CD4-positive, alpha-beta T cell (primary cell): ENCODE measurements at regions of chr7 and their contacts with region 1.

Region 1: GRCh38 chr7:100148559-100149350 is at the start of gene LAMTOR4:
- DNase-seq: peak; percentile 94 to 100 (median 97)
- ATAC-seq: peak; percentile 95
- H3K4me3 ChIP-seq: peak within 1 kb of the TSS; percentile 99
- H3K4me3 Mint-ChIP-seq: peak within 1 kb of the TSS; percentile 92
- H3K27ac ChIP-seq: peak within 1 kb of the TSS; percentile 93 to 94
- H3K27ac Mint-ChIP-seq: peak within 1 kb of the TSS; percentile 95
- H3K4me1 ChIP-seq: peaks cover 41% of the 10 kb centered on the region
- H3K4me1 Mint-ChIP-seq: peaks cover 38% of the 10 kb centered on the region
- H3K27me3 ChIP-seq: no peaks in the 10 kb centered on the region
- H3K27me3 Mint-ChIP-seq: no peaks in the 10 kb centered on the region
- CTCF ChIP-seq: peak; percentile 9
- total RNA-seq, gene LAMTOR4: 107 to 125 TPM

Region 2: DNA sequence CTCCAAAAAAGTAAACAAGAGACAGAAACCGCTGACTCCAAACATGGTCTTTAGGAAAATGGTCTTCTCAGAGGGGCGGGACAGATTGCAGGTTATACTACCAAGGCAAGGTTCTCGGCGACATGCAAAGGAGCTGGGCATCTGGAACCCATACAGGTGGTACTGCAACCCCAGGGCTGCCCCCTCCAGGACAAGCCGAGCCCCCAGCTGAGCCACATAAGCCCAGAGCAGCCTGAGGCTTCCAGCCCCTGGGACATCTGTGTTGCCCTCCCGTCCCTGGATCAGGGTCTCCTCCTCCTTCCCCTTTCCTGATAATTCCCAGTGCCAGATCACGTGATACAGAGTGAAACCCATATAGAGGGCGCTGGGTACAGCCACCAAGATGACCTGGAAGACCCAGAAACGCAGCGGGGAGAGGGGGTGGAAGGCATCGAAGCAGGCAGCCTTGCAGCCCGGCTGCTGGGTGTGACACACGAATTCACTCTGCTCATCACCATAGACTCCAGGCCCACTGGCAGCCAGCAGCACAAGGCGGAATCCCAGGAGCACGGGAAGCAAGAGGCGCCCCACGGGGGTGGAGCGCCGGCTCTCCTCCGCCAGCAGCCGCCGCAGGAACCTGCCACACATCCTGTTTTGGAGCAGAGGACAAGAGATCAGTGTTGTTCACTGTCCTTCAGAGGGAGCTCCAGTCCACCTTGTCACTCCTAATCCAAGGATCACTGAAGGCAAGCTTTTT is 219.6 kb before region 1 on chr7 and contains the start of gene GJC3:
- CTCF ChIA-PET with region 1: no interaction called
- POLR2A ChIA-PET with region 1: no interaction called
- intact Hi-C with region 1: no loop called
- DNase-seq: peak; percentile 15 to 68 (median 45)
- ATAC-seq: peak; percentile 94
- H3K4me3 ChIP-seq: peak within 1 kb of the TSS; percentile 43
- H3K4me3 Mint-ChIP-seq: peak within 1 kb of the TSS; percentile 79
- H3K27ac ChIP-seq: no peak within 1 kb of the TSS
- H3K27ac Mint-ChIP-seq: peak within 1 kb of the TSS; percentile 61
- H3K4me1 ChIP-seq: peaks cover 18% of the 10 kb centered on the region
- H3K4me1 Mint-ChIP-seq: peaks cover 31% of the 10 kb centered on the region
- H3K27me3 ChIP-seq: peaks cover 0 to 13% of the 10 kb centered on the region in 2 experiments
- H3K27me3 Mint-ChIP-seq: peaks cover 6% of the 10 kb centered on the region
- CTCF ChIP-seq: no peak
- total RNA-seq, gene GJC3: 0.25 to 0.36 TPM

Region 3: DNA sequence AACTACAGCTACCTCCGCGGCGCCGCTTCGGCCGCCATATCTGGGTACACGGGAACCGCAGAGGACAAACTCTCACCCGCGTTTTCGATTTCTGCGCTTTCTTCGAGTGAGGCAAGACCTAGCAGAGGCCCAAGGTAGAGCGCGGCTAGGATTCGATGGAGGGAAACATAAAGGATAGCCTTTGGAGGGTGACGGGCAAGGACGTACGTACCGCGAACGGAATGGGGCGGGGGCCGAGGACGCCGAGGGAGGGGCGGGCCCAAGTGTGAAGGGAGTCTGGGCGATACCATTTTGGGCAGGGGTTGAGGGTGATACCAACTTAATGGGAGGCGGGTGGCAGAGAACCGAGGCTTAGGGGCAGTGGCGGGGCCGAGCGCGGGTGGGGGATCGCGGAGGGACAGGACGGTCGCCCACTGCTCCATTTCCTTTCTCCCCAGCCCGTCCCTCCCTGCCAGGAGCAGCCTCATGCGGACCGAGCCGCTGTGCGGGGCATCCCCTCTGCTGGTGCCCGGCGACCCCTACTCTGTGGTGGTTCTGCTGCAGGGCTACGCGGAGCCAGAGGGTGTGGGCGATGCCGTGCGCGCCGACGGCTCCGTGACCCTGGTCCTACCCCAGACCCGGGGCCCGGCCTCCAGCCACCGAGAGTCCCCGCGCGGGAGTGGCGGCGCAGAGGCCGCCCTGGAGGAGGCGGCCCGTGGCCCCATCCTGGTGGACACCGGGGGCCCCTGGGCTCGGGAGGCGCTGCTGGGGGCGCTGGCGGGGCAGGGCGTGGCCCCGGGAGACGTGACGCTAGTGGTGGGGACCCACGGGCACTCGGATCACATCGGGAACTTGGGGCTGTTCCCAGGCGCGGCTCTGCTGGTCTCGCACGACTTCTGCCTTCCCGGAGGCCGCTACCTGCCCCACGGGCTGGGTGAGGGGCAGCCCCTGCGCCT is 21.6 kb before region 1 on chr7 and contains the start of gene MBLAC1:
- CTCF ChIA-PET with region 1: interaction called, 9 read pairs
- POLR2A ChIA-PET with region 1: interaction called, 13 read pairs
- intact Hi-C with region 1: loop called in 1 of 2 experiments (anchors 2 kb)
- DNase-seq: peak; percentile 87 to 97 (median 91)
- ATAC-seq: peak; percentile 80
- H3K4me3 ChIP-seq: peak within 1 kb of the TSS; percentile 96
- H3K4me3 Mint-ChIP-seq: peak within 1 kb of the TSS; percentile 100
- H3K27ac ChIP-seq: peak within 1 kb of the TSS; percentile 96 to 99
- H3K27ac Mint-ChIP-seq: peak within 1 kb of the TSS; percentile 100
- H3K4me1 ChIP-seq: peaks cover 39% of the 10 kb centered on the region
- H3K4me1 Mint-ChIP-seq: peaks cover 31% of the 10 kb centered on the region
- H3K27me3 ChIP-seq: no peaks in the 10 kb centered on the region
- H3K27me3 Mint-ChIP-seq: no peaks in the 10 kb centered on the region
- CTCF ChIP-seq: no peak
- total RNA-seq, gene MBLAC1: 3.7 to 4.4 TPM

Region 4: DNA sequence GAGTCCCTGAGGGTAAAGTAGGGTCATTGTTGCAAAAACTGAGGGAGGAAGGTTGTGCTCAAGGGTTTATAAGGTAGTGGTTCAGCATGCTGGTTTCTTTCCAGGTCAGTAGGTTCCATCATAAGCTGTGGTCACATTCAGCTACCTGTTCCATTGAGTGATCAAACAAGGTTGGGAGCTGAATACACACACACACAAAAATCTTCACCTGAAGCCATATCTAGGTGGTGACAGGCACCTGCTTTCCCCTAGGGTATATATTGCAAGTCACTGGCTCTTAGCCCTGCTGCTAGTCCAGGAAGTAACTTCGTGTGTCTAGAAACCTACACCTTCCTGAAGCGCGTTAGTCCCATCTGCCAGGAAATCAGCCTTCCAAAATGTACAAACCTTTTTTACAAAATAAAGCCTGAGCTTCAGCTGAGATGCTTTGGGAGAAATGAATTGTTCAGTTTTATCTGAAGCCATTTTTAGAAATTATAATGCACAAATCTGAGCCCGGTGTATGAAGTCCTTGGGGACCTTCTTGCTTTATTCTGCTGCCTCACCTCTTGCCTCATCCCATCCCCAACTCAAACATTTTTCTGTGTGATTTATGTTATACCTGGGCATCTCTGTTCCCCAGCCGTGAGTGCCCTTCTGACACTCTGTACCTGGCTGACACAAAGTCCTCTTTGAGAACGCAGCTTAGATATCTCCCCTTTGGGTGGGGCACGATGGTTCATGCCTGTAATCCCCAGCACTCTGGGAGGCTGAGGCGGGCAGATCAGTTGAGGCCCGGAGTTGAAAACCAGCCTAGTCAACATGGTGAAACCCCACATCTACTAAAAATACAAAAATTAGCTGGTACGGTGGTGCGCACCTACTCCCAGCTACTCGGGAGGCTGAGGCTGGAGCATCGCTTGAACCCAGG is 10.6 kb before region 1 on chr7:
- CTCF ChIA-PET with region 1: interaction called, 5 read pairs
- POLR2A ChIA-PET with region 1: interaction called, 12 read pairs
- intact Hi-C with region 1: loop called in 1 of 2 experiments (anchors 2 kb)
- DNase-seq: peak in 1 of 14 experiments; percentile 36
- ATAC-seq: peak; percentile 65
- H3K4me3 ChIP-seq: no peak overlapping the region
- H3K4me3 Mint-ChIP-seq: no peak overlapping the region
- H3K27ac ChIP-seq: no peak overlapping the region
- H3K27ac Mint-ChIP-seq: peak overlapping the region; percentile 26
- H3K4me1 ChIP-seq: peaks cover 8% of the 10 kb centered on the region
- H3K4me1 Mint-ChIP-seq: peaks cover 13% of the 10 kb centered on the region
- H3K27me3 ChIP-seq: no peaks in the 10 kb centered on the region
- H3K27me3 Mint-ChIP-seq: no peaks in the 10 kb centered on the region
- CTCF ChIP-seq: no peak

Region 5: GRCh38 chr7:100171087-100171681 is 22.4 kb after region 1 on chr7:
- CTCF ChIA-PET with region 1: no interaction called
- POLR2A ChIA-PET with region 1: interaction called, 53 read pairs
- intact Hi-C with region 1: loop called in 1 of 2 experiments (anchors 2 kb)
- DNase-seq: peak in 6 of 14 experiments; percentile 25 to 69 (median 56)
- ATAC-seq: peak; percentile 22
- H3K4me3 ChIP-seq: peak overlapping the region; percentile 52
- H3K4me3 Mint-ChIP-seq: peak overlapping the region; percentile 85
- H3K27ac ChIP-seq: peak overlapping the region in 1 of 2 donors; percentile 50
- H3K27ac Mint-ChIP-seq: peak overlapping the region; percentile 91
- H3K4me1 ChIP-seq: peaks cover 65% of the 10 kb centered on the region
- H3K4me1 Mint-ChIP-seq: peaks cover 62% of the 10 kb centered on the region
- H3K27me3 ChIP-seq: peaks cover 0 to 3% of the 10 kb centered on the region in 2 experiments
- H3K27me3 Mint-ChIP-seq: no peaks in the 10 kb centered on the region
- CTCF ChIP-seq: no peak

Region 6: GRCh38 chr7:100177045-100178001 is 28.6 kb after region 1 on chr7 and contains the starts of genes GPC2 and STAG3:
- CTCF ChIA-PET with region 1: no interaction called
- POLR2A ChIA-PET with region 1: interaction called, 22 read pairs
- intact Hi-C with region 1: loop called (anchors 1 to 2 kb)
- DNase-seq: peak; percentile 95 to 98 (median 98)
- ATAC-seq: peak; percentile 87
- H3K4me3 ChIP-seq: peak within 1 kb of the TSS; percentile 70
- H3K4me3 Mint-ChIP-seq: peak within 1 kb of the TSS; percentile 82
- H3K27ac ChIP-seq: peak within 1 kb of the TSS in 1 of 2 donors; percentile 41
- H3K27ac Mint-ChIP-seq: peak within 1 kb of the TSS; percentile 34
- H3K4me1 ChIP-seq: peaks cover 48% of the 10 kb centered on the region
- H3K4me1 Mint-ChIP-seq: peaks cover 48% of the 10 kb centered on the region
- H3K27me3 ChIP-seq: no peaks in the 10 kb centered on the region
- H3K27me3 Mint-ChIP-seq: no peaks in the 10 kb centered on the region
- CTCF ChIP-seq: no peak
- total RNA-seq, gene GPC2: 16.4 to 18.7 TPM
- total RNA-seq, gene STAG3: 4.0 to 5.5 TPM

Region 7: GRCh38 chr7:100215895-100216294 is 67.1 kb after region 1 on chr7:
- CTCF ChIA-PET with region 1: interaction called, 3 read pairs
- POLR2A ChIA-PET with region 1: interaction called, 10 read pairs
- intact Hi-C with region 1: no loop called
- DNase-seq: no peak
- ATAC-seq: no peak
- H3K4me3 ChIP-seq: no peak overlapping the region
- H3K4me3 Mint-ChIP-seq: no peak overlapping the region
- H3K27ac ChIP-seq: no peak overlapping the region
- H3K27ac Mint-ChIP-seq: peak overlapping the region; percentile 40
- H3K4me1 ChIP-seq: peaks cover 52% of the 10 kb centered on the region
- H3K4me1 Mint-ChIP-seq: peaks cover 55% of the 10 kb centered on the region
- H3K27me3 ChIP-seq: no peaks in the 10 kb centered on the region
- H3K27me3 Mint-ChIP-seq: no peaks in the 10 kb centered on the region
- CTCF ChIP-seq: no peak